CD4-positive, alpha-beta T cell (primary cell): ENCODE measurements at regions of chr20 and their contacts with region 1.

Region 1: GRCh38 chr20:3092611-3093379 is 8.3 kb upstream of the AVP start:
- DNase-seq: peak; percentile 25 to 70 (median 52)
- ATAC-seq: peak; percentile 21
- H3K4me3 ChIP-seq: peak overlapping the region; percentile 47
- H3K4me3 Mint-ChIP-seq: peak overlapping the region; percentile 95
- H3K27ac ChIP-seq: peak overlapping the region; percentile 76 to 86
- H3K27ac Mint-ChIP-seq: peak overlapping the region; percentile 100
- H3K4me1 ChIP-seq: peaks cover 26% of the 10 kb centered on the region
- H3K4me1 Mint-ChIP-seq: peaks cover 40% of the 10 kb centered on the region
- H3K27me3 ChIP-seq: peaks cover 0 to 11% of the 10 kb centered on the region in 2 experiments
- H3K27me3 Mint-ChIP-seq: peaks cover 8% of the 10 kb centered on the region
- CTCF ChIP-seq: no peak

Region 2: GRCh38 chr20:3082306-3082951 is 10.4 kb before region 1 on chr20:
- CTCF ChIA-PET with region 1: interaction called, 8 read pairs
- POLR2A ChIA-PET with region 1: interaction called, 48 read pairs
- intact Hi-C with region 1: loop called in 1 of 2 experiments (anchors 1 kb)
- DNase-seq: peak in 3 of 14 experiments; percentile 28 to 44 (median 34)
- ATAC-seq: peak; percentile 62
- H3K4me3 ChIP-seq: peak overlapping the region; percentile 30
- H3K4me3 Mint-ChIP-seq: peak overlapping the region; percentile 78
- H3K27ac ChIP-seq: no peak overlapping the region
- H3K27ac Mint-ChIP-seq: no peak overlapping the region
- H3K4me1 ChIP-seq: peaks cover 18% of the 10 kb centered on the region
- H3K4me1 Mint-ChIP-seq: peaks cover 18% of the 10 kb centered on the region
- H3K27me3 ChIP-seq: peaks cover 26 to 32% of the 10 kb centered on the region in 2 experiments
- H3K27me3 Mint-ChIP-seq: peaks cover 45% of the 10 kb centered on the region
- CTCF ChIP-seq: no peak